ENCODE measurements at regions of chr22 and their contacts with region 1.

Region 1: DNA sequence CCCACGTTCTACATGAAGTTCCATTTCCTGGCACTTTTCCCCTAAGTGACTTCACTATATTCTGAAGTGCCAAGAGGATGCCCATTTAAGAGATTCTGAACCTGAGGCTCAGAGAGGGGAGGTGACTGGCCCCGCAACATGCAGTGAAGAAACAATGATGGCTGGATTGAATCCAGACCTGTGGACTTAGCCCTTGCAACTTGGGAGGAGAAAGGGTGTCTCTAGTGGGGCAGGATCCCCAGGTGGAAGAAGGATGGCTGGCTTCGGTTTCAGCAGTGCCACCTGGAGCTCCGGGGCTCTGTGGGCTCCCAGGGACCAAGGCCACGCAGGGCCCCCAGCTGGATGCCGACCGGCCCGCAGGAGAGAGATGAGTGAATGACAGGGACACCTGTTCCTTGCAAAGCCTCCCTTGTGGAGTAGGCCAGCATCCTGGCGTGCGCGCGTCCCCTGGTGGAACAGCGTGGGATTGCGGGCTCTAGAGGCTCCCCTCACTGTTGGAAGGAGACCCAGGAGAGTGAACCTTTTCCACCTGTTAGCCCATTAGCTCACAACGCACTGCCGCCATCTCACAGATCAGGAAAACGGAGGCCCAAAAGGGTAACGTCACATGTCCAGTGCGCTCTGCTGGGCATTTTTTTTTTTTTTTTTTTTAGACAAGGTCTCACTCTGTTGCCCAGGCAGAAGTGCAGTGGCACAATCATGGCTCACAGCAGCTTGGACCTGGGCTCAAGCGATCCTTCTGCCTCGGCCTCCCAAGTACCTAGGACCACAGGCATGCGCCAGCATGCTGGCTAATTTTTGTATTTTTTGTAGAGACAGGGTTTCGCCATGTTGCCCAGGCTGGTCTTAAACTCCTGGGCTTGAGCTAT is 104.7 kb downstream of the KIAA1671 start:
- DNase-seq: peak; percentile 38 to 89 (median 88)
- ATAC-seq: peak; percentile 53 to 61
- H3K4me3 ChIP-seq: no peak overlapping the region
- H3K27ac ChIP-seq: no peak overlapping the region
- H3K4me1 ChIP-seq: no peaks in the 10 kb centered on the region
- H3K27me3 ChIP-seq: no peaks in the 10 kb centered on the region

Region 2: DNA sequence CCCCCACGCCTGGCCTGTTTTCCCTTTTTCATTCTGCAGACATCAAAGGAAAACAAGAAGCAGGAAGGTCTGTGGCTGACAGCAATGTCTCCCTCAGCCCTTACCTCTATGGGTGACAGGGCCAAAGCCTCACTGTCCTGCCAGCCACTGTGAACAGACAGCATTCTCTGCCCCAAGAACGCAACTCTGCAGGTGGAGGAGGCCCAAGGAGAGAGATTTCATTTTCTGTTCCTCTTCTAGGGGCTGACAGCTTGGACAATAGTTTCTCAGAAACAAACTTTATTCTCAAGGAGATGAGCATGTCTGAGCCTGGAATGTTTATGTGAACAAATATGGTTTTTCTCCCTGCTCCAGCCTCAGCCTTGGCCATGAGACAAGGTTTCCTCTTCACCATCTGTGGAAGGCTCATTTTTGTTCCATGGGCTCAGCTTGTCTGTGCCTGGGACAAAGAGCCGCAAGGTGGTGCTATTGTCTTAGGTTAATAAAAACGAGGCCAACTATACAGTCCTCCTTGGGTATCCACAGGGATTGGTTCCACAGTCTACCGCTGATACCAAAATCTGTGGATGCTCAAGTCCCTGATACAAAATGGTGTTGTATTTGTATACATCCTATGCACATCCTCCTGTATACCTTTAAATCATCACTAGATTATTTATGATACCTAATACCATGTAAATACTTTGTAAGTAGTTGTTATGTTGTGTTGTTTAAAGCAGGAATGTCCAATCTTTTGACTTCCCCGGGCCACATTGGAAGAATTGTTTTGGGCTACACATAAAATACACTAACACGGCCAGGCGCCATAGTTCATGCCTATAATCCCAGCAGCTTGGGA is 288.5 kb before region 1 on chr22:
- intact Hi-C with region 1: loop called in 1 of 4 experiments (anchors 10 kb)
- DNase-seq: peak; percentile 51 to 83 (median 59)
- ATAC-seq: peak; percentile 82 to 87
- H3K4me3 ChIP-seq: no peak overlapping the region
- H3K27ac ChIP-seq: no peak overlapping the region
- H3K4me1 ChIP-seq: no peaks in the 10 kb centered on the region
- H3K27me3 ChIP-seq: no peaks in the 10 kb centered on the region

Region 3: DNA sequence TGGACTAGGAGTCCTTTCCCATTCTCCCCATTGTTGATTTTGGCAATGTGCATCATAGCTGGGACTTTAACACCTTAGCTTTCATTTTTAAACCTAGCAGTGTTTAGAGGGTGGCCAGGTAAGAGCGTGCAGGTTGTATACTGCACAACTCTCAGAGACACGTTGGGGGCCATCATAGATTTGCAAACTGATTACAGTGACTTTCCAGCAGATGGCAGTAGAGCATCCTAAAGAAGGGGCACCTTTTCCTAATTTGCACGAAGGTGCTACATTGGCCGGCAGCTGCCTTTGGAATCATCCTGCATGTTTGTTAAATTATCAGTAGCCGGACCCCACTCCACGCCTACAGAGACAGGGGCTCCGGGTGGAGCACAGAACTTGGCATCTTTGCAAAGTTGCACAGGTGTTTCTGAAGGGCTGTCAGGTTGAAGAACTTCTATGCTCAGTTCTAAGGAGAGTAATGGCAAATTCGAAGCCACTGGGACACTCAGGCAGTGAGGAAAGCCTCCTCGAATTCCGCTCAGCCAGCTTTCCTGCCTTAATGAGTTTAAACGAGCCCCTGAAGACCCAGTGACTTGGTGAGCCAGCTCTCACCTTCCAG is 118.4 kb before region 1 on chr22:
- intact Hi-C with region 1: loop called in 2 of 4 experiments (anchors 5 kb)
- DNase-seq: peak in 1 of 3 donors; percentile 48
- ATAC-seq: peak; percentile 51 to 58
- H3K4me3 ChIP-seq: no peak overlapping the region
- H3K27ac ChIP-seq: no peak overlapping the region
- H3K4me1 ChIP-seq: no peaks in the 10 kb centered on the region
- H3K27me3 ChIP-seq: no peaks in the 10 kb centered on the region

Region 4: GRCh38 chr22:25013607-25014006 is 43.6 kb before region 1 on chr22:
- intact Hi-C with region 1: no loop called
- DNase-seq: peak; percentile 49 to 70 (median 68)
- ATAC-seq: peak; percentile 82 to 92
- H3K4me3 ChIP-seq: no peak overlapping the region
- H3K27ac ChIP-seq: peak overlapping the region; percentile 76
- H3K4me1 ChIP-seq: peaks cover 4% of the 10 kb centered on the region
- H3K27me3 ChIP-seq: no peaks in the 10 kb centered on the region

Measured in right cardiac atrium (tissue), 5 donors.